Astrocyte of the cerebellum (primary cell): ENCODE measurements at regions of chr17 and their contacts with region 1.

Region 1: GRCh38 chr17:57121338-57122042 is 36.4 kb downstream of the AKAP1 start:
- DNase-seq: peak; percentile 27
- H3K4me3 ChIP-seq: no peak overlapping the region
- CTCF ChIP-seq: peak; percentile 84

Region 2: GRCh38 chr17:57004944-57005579 is 116.4 kb before region 1 on chr17:
- in situ Hi-C with region 1: no loop called
- DNase-seq: no peak
- H3K4me3 ChIP-seq: no peak overlapping the region
- CTCF ChIP-seq: peak; percentile 30

Region 3: DNA sequence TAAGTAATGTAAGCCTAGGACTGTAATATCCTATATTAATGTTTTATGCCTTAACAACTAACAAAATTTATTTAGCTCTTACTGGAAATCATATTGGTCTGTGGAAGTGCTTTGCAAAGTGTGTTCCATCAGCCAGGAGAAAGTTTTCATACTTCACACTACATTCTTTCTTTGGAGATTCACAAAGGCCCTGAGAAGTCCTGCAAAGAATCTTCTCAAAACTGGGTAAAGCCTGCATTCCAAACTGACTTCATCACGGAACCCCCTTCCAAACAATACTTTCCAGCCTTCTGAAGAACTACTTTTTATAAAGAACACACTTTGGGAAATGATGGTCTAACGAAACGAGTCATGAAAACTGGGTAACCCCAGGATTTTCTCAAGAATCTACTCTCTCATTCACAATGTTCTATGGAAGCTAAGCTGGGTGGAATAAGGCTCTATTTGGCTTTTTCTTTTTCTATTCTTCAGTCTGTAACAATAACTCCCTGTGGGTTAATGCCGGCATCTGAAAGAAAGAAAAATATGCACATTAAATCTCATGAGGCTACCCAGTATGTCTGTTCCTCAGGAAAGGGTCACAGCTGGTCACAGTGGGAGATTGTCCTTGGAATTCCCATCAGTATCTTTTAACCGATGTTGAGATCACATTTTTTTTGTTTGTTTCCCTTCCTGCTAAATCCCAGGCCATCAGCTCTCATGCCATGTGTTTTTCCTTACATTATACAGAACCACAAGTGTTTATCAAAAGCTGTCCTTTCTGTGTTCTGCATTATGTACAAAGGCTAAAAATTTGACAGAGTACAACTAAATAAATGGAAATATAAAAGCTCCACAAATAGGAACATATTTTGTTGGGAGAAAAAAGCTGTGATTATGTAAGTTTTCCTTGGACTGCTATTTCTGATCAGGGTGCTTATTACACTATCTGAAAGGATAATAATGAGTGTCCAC is 49.2 kb before region 1 on chr17:
- in situ Hi-C with region 1: no loop called
- DNase-seq: no peak
- H3K4me3 ChIP-seq: no peak overlapping the region
- CTCF ChIP-seq: no peak

Region 4: DNA sequence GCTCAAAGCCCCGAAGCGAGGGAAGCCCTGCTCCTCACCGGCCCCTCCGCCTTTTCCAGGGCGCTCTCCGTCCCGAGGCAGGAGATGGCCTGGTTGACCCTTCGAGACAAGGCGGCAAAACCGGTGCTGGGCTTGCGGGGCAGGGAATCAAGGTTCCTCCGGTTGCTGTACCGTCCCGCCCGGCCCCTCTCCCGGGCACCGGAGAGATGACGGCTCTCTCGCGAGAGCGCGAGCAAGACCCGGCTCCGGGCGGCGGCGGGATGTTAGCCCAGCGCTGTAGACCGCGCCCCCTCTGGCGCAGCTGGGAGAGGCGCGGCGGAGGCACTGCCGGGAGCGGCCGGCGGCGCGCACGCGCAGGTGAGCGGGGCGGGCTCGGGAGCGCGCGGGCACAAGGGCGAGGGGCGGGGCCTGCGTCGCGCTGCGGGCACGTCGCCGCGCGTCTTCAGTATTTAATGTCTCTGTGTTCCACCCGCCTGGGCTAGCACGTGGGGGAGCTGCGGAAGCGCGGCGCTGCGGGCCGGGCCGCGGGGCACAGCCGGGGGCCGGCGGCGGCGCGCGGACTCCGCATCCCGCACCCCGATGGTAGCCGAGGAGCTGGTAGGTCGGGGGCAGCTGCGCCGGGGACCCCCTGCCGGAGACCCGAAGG is 36.6 kb before region 1 on chr17 and contains the start of gene AKAP1:
- in situ Hi-C with region 1: loop called (anchors 5 kb)
- DNase-seq: peak; percentile 85
- H3K4me3 ChIP-seq: peak within 1 kb of the TSS; percentile 76
- CTCF ChIP-seq: no peak